A549 (cell line): ENCODE measurements at regions of chr15 and their contacts with region 1.

Region 1: DNA sequence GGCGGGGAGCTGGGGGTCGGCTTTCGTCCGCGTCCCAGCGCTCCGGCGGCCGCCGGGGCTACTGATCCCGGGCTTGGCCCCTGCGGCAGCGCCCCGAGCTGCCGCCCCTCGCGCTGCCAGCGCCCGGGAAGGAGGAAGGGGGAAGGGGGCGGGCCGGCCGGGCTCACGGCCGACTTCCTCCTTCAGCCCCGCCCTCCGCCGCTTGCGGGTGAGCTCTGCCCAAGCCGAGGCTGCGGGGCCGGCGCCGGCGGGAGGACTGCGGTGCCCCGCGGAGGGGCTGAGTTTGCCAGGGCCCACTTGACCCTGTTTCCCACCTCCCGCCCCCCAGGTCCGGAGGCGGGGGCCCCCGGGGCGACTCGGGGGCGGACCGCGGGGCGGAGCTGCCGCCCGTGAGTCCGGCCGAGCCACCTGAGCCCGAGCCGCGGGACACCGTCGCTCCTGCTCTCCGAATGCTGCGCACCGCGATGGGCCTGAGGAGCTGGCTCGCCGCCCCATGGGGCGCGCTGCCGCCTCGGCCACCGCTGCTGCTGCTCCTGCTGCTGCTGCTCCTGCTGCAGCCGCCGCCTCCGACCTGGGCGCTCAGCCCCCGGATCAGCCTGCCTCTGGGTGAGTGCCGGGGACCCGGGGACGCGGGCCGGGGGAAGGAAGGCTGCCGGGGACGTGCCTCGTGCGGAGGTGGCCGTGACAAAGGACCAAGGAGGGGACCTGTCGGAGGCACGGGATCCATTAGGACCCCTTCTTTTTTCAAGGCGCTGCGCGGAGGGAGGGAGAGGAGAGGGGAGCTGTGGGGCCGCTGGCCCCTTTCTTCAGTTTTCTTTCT is at the start of gene SEMA4B:
- DNase-seq: peak; percentile 61 to 92
- ATAC-seq: peak; percentile 88
- H3K4me3 ChIP-seq: peak within 1 kb of the TSS; percentile 80
- H3K27ac ChIP-seq: peak within 1 kb of the TSS; percentile 90 to 98
- H3K4me1 ChIP-seq: peaks cover 38% of the 10 kb centered on the region
- CTCF ChIP-seq: no peak
- EP300 ChIP-seq: no peak; a peak in 1 of 5 replicates
- POLR2A ChIP-seq: peak; percentile 73
- RAD21 ChIP-seq: no peak; a peak in 2 of 5 replicates
- polyA plus RNA-seq, gene SEMA4B: 45.3 and 61.0 TPM in 2 replicates

Region 2: GRCh38 chr15:90184786-90185569 is 16.4 kb before region 1 on chr15:
- CTCF ChIA-PET with region 1: interaction called, 8 read pairs
- POLR2A ChIA-PET with region 1: interaction called, 19 read pairs
- DNase-seq: peak; percentile 91 to 95
- ATAC-seq: peak; percentile 82 to 87
- H3K4me3 ChIP-seq: peak overlapping the region; percentile 62
- H3K27ac ChIP-seq: peak overlapping the region; percentile 82 to 93
- H3K4me1 ChIP-seq: peaks cover 54% of the 10 kb centered on the region
- CTCF ChIP-seq: no peak
- EP300 ChIP-seq: peak in 1 of 2 experiments; percentile 64; a peak in 1 of 5 replicates
- POLR2A ChIP-seq: peak; percentile 8; the same call in 1 of the 2 replicates
- RAD21 ChIP-seq: peak in 1 of 2 experiments; percentile 50; a peak in 2 of 5 replicates

Region 3: DNA sequence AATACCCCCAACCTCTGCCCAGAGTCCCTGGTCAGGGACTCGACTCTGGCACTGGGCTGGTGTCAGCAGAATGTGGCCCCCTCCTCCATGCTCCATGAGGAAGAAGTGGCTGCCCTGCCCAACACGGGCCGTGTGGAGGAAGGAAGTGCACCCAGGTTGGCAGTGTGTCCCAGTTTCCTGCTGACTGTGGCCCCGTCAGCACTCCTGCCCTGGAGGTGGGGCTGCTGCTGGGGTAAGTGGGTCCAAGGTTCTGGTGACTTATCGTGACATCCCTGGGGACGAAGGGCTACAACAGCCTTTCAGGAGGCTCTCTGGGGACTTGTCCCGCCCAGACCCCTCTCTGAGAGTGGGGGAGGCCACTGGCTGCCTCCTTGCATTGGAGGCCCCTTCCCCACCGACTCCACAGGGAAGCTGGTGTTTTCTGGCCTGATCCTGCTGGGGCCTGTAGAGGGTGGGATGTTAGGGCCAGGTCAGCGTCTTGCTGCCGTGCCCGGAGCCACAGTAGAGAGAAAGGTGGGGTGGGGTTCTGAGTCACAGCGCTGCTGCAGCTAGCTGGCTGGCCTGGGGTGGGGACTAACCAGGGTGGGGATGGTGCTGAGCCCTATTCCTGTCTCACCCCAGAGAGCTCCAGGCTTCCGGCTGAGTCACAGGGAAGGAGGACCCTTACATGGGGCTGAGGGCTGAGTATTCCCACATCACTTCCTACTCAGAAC is 10.2 kb after region 1 on chr15:
- CTCF ChIA-PET with region 1: interaction called, 217 read pairs
- POLR2A ChIA-PET with region 1: interaction called, 17 read pairs
- DNase-seq: peak; percentile 88 to 96
- ATAC-seq: peak; percentile 90 to 92
- H3K4me3 ChIP-seq: peak overlapping the region; percentile 21; the same call in 1 of the 3 replicates
- H3K27ac ChIP-seq: peak overlapping the region; percentile 90 to 92
- H3K4me1 ChIP-seq: peaks cover 59% of the 10 kb centered on the region
- CTCF ChIP-seq: no peak
- EP300 ChIP-seq: no peak
- POLR2A ChIP-seq: peak; percentile 10; the same call in 1 of the 2 replicates
- RAD21 ChIP-seq: no peak